Pancreas (tissue), 10 donors: ENCODE measurements at regions of chr2 and their contacts with region 1.

Region 1: GRCh38 chr2:67210430-67210829 is 186.7 kb upstream of the ETAA1 start:
- DNase-seq: no peak
- ATAC-seq: no peak
- H3K4me3 ChIP-seq: no peak overlapping the region
- H3K27ac ChIP-seq: no peak overlapping the region
- H3K4me1 ChIP-seq: peaks cover under 1 to 31% (median 10%) of the 10 kb centered on the region in 3 donors
- H3K27me3 ChIP-seq: no peaks in the 10 kb centered on the region
- CTCF ChIP-seq: no peak

Region 2: DNA sequence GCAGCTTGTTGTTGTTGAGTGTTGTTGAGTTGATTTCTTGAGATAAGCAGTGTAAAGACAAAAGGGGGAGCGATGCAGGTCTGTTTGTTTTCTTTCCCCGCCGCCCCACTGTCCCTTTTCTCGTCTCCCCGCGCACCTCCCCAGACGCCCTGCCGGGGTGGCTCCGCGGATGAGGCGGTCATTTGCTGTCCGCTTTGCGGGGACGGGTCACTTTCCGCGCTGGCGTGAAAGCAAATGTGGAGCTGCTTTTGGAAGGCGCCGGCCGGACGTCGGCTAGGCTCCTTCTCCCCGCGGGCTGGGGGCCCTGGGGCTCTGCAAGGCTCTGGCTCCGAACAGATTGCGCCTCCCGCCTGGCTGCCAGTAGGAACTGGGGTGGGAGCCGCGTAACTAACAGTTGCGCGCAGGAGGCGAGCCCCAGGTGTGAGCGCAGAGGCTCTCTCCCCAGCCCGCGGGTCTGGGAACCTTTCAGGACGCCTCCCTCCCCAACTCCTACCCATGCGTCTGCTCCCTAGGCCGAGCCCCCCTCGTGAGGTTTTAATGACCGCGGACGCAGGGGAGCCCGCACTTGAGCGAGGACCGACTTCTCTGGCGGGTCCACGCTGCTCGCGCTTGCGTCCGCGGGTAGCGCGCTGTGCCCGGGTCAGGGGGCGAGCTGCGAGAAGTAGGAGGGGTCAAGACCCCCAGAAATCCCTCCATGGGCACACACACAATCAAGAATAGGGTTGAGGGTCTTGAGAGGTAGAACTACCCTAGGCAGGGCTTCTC is 628.9 kb before region 1 on chr2:
- intact Hi-C with region 1: loop called in 1 of 3 experiments (anchors 5 kb)
- DNase-seq: peak; percentile 60 to 87 (median 68)
- ATAC-seq: peak; percentile 19 to 35 (median 24)
- H3K4me3 ChIP-seq: peak overlapping the region; percentile 4 to 64 (median 46)
- H3K27ac ChIP-seq: peak overlapping the region; percentile 93 to 98 (median 96)
- H3K4me1 ChIP-seq: peaks cover 9 to 31% (median 13%) of the 10 kb centered on the region in 3 donors
- H3K27me3 ChIP-seq: no peaks in the 10 kb centered on the region
- CTCF ChIP-seq: no peak

Region 3: DNA sequence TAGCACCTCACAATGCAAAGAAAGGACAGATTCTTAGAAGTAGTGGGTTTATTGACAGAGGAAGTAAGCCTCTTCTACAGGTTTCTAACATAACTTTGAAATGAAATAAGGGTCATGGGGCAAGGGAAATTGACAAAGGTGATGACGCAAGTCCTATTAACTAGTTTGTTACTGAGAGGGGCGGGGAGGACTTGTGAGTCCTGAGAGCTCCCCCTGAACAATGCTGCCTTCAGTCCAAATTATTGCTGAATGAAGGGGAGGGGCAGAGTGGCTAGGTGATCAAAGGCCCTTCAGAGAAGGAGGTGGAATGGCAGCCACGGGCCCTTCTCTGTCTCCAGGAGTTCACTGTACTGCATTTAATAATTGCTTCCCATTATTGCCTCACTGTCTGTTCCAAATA is 385.5 kb before region 1 on chr2:
- intact Hi-C with region 1: no loop called
- DNase-seq: no peak
- ATAC-seq: no peak
- H3K4me3 ChIP-seq: no peak overlapping the region
- H3K27ac ChIP-seq: no peak overlapping the region
- H3K4me1 ChIP-seq: no peaks in the 10 kb centered on the region
- H3K27me3 ChIP-seq: no peaks in the 10 kb centered on the region
- CTCF ChIP-seq: no peak